OCI-LY7 (cell line): ENCODE measurements at regions of chr17 and their contacts with region 1.

Region 1: GRCh38 chr17:31437720-31438420 is 46.4 kb downstream of the RAB11FIP4 start:
- DNase-seq: no peak
- H3K4me3 ChIP-seq: no peak overlapping the region
- H3K27ac ChIP-seq: no peak overlapping the region
- H3K4me1 ChIP-seq: no peaks in the 10 kb centered on the region
- CTCF ChIP-seq: no peak

Region 2: GRCh38 chr17:31388770-31389661 is 48.9 kb before region 1 on chr17:
- CTCF ChIA-PET with region 1: no interaction called
- POLR2A ChIA-PET with region 1: no interaction called
- intact Hi-C with region 1: loop called (anchors 5 kb)
- DNase-seq: peak; percentile 48
- H3K4me3 ChIP-seq: no peak overlapping the region
- H3K27ac ChIP-seq: no peak overlapping the region
- H3K4me1 ChIP-seq: no peaks in the 10 kb centered on the region
- CTCF ChIP-seq: peak; percentile 85

Region 3: DNA sequence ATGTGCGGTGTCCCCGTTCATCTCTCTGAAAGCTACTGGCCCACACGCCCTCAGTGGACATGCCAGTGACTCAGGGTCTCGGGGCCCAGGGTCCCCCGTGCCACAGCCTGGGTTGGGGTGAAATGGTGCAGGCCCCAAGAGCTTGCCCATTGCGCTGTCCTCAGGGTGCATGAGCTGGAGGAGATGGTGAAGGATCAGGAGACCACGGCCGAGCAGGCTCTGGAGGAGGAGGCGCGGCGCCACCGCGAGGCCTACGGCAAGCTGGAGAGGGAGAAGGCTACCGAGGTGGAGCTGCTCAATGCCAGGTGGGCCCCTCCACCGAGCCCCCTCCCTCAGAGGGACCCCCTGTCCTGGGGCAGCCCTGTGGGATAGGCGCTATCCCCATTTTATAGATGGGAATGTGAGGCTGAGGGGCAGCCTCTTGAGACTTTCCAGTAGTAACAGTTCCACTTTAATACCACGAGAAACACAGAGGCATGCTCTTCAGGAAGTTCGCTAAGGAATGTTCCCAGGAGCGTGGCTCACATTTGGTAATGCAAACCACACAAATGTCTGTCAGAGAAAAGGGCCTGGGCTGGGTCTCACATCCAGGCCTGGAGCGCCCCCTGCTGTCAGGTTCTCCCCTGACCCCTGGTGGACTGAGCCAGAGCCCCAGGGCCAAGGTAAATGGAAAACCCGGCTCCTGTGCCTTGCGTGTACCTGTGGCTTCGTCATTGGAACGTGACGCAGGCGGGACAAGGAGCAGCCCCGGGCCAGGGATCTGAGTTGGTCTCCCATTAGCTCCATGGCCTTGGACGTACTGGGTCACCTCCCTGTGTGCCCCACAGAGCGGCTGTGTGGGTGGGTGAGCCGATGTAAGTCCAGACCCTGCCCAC is 87.3 kb after region 1 on chr17:
- CTCF ChIA-PET with region 1: no interaction called
- POLR2A ChIA-PET with region 1: no interaction called
- intact Hi-C with region 1: loop called (anchors 1 kb)
- DNase-seq: peak; percentile 82
- H3K4me3 ChIP-seq: peak overlapping the region; percentile 14
- H3K27ac ChIP-seq: no peak overlapping the region
- H3K4me1 ChIP-seq: peaks cover 11% of the 10 kb centered on the region
- CTCF ChIP-seq: peak; percentile 90

Region 4: DNA sequence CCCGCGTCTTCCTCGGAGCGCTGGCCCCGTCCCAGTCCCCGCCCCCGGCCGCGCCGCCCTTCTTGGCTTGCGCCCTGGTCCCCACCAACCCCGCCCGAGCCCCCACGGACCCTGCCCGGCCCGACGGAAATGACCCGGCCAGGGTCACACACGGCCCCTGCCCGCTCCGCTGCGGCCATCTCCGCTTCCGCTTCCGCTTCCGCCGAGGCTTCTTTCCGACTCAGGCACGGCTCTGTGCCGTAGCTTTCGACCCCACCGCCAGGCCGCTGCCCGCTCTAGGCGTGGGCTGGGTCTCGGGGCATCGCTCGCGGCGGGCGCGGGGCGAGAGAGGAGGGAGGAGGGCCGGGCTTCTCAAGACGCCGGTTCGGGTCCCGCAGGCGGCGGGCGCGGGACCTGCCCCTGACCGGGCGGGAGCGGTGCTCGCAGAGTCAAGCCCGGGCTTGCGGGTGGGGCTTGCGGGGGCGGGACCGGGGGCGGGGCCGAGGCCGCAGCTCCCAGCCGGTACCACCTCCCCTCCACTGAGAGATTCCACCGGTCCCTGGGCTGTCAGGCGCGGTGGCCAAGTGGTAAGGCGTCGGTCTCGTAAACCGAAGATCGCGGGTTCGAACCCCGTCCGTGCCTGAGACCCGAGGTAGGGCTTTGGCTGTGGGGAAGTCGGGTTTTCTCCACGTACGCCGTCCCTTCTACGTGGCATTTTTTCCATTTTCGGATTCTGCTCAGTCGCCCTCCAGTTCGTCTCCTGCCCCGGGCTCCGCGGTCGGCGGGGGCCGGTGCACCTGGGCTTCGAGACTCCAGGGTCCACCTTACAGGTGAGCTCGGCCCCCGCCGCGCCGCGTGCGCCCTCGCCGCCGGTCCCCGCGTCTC is 111.9 kb after region 1 on chr17:
- CTCF ChIA-PET with region 1: no interaction called
- POLR2A ChIA-PET with region 1: no interaction called
- intact Hi-C with region 1: no loop called
- DNase-seq: peak; percentile 87
- H3K4me3 ChIP-seq: peak overlapping the region; percentile 97
- H3K27ac ChIP-seq: peak overlapping the region; percentile 68
- H3K4me1 ChIP-seq: peaks cover 20% of the 10 kb centered on the region
- CTCF ChIP-seq: no peak

Region 5: GRCh38 chr17:31842183-31843069 is 404.6 kb after region 1 on chr17:
- CTCF ChIA-PET with region 1: no interaction called
- POLR2A ChIA-PET with region 1: no interaction called
- intact Hi-C with region 1: loop called (anchors 2 kb)
- DNase-seq: peak; percentile 80
- H3K4me3 ChIP-seq: no peak overlapping the region
- H3K27ac ChIP-seq: no peak overlapping the region
- H3K4me1 ChIP-seq: peaks cover 8% of the 10 kb centered on the region
- CTCF ChIP-seq: peak; percentile 99